ENCODE measurements at regions of chr9 and their contacts with region 1.

Region 1: GRCh38 chr9:136728080-136728547 is 14.6 kb downstream of the LCN10 start:
- H3K4me3 ChIP-seq: peak overlapping the region; percentile 59
- H3K27ac ChIP-seq: peak overlapping the region; percentile 71
- H3K4me1 ChIP-seq: no peaks in the 10 kb centered on the region; the same call in 1 of the 2 replicates
- CTCF ChIP-seq: peak; percentile 98

Region 2: GRCh38 chr9:136671646-136672430 is 56.3 kb before region 1 on chr9:
- CTCF ChIA-PET with region 1: interaction called, 7 read pairs
- POLR2A ChIA-PET with region 1: interaction called, 18 read pairs
- H3K4me3 ChIP-seq: no peak overlapping the region
- H3K27ac ChIP-seq: no peak overlapping the region
- H3K4me1 ChIP-seq: no peaks in the 10 kb centered on the region
- CTCF ChIP-seq: peak; percentile 88

Region 3: DNA sequence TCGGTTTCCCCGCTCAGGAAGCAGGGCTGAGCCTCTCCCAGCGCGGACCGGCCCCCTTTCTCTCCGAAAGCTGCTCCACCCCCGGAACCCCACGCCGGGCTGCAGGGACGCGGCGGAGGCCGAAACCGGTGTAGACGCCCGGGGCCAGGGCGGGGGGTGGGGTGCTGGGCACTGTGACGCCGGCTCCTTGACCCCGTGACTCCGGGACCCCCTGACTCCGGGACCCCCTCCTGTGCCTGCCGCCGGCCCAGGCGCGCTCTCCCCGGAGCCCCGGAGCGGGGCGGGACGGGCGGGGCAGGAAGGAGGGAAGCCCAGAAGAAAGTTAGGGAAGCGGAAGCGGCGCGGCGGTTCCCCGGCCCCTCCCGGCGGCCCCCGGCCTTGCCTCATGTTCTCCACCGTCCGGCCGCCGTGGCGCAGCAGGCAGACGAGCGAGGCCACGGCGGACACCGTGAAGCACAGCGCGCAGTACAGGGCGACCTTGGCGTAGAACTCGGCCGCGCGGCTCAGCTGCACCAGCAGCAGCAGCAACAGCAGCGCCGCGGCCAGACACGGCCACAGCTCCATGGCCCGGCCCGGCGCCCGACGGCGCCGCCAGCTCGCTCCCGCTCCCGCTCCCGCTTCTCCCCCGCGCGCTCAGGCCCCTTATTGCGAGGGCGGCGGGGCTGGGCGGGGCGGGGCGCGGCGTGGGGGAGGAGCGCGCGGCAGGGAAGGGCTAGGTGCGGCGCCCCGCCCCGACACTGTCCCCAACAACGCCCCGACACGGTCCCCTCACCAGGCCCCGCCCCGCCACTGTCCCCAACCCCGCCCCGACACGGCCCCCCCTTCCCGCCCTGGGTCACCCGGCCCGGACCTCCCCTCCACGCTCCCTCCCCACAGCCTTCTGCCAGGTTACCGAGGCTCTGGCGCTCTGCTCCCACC is 41.1 kb before region 1 on chr9 and contains the start of gene AGPAT2:
- CTCF ChIA-PET with region 1: interaction called, 3 read pairs
- POLR2A ChIA-PET with region 1: interaction called, 22 read pairs
- H3K4me3 ChIP-seq: peak within 1 kb of the TSS; percentile 71
- H3K27ac ChIP-seq: peak within 1 kb of the TSS; percentile 74; the same call in 1 of the 2 replicates
- H3K4me1 ChIP-seq: peaks cover 5% of the 10 kb centered on the region
- CTCF ChIP-seq: peak; percentile 45; the same call in 1 of the 2 replicates

Region 4: DNA sequence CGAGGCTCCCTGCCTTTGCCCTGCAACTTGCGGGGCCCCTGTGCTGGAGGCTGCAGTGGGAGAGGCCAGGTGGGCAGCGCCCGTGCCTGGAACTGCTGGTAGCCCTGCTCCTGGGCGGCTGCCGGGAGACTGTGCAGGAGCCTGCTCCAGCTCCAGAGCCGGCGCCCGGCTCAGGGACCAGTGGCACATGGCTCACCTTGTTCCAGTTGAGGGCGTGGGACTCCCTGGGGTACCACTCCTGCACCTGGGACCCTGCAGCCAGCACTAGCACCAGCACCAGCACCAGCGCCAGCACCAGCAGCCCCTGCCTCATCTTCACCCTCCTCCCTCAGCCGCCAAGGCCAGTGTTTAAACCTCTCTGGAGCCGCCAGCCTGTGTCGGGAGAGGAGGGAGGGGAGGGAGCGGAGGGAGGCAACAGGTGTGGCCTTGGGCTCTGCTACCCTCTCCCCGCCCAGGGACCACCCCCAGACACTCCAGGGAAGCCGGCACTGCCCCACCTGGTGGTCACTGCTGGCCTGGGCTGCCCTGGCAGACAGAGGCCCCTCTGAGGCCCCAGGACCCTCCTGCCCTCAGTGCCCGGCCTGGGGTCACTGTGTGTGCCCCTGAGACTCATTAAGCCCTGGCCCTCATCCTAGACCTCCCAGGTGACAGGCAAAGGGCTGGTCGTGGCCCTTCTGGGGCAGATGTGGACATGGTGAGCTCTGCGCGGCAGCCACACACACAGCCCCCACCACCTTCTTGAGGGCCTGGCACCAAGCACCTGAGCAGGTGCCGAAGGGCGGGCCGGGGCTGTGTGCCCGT is 14.7 kb after region 1 on chr9 and contains the start of gene LCN10:
- CTCF ChIA-PET with region 1: interaction called, 14 read pairs
- POLR2A ChIA-PET with region 1: interaction called, 22 read pairs
- H3K4me3 ChIP-seq: no peak within 1 kb of the TSS
- H3K27ac ChIP-seq: no peak within 1 kb of the TSS
- H3K4me1 ChIP-seq: no peaks in the 10 kb centered on the region
- CTCF ChIP-seq: peak; percentile 64

Region 5: GRCh38 chr9:136757328-136757727 is 29.2 kb after region 1 on chr9:
- CTCF ChIA-PET with region 1: interaction called, 13 read pairs
- POLR2A ChIA-PET with region 1: interaction called, 14 read pairs
- H3K4me3 ChIP-seq: no peak overlapping the region
- H3K27ac ChIP-seq: no peak overlapping the region
- H3K4me1 ChIP-seq: no peaks in the 10 kb centered on the region
- CTCF ChIP-seq: no peak

Region 6: DNA sequence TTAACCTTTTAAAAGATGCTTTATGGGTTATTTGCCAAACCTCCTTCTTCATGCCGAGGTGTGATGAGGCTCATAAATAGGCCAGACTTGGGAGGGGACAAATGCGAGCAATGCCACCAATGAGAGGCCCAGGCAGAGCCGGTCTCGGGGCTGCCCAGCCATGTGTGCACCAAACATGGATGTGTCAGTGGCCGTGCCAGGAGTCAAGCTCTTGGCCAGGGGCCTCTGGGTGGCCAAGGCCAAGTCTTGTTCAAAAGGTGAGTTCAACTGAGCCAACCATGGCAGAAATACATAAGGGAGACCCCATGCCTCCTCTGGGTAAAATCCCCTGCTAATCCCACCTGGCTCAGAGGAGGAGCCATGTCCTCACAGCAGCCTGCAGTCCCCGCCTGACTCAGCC is 47.1 kb after region 1 on chr9:
- CTCF ChIA-PET with region 1: interaction called, 4 read pairs
- POLR2A ChIA-PET with region 1: interaction called, 12 read pairs
- H3K4me3 ChIP-seq: no peak overlapping the region
- H3K27ac ChIP-seq: no peak overlapping the region
- H3K4me1 ChIP-seq: no peaks in the 10 kb centered on the region
- CTCF ChIP-seq: no peak